Naive thymus-derived CD4-positive, alpha-beta T cell (primary cell): ENCODE measurements at regions of chr5 and their contacts with region 1.

Region 1: GRCh38 chr5:32329308-32329834 is 16.6 kb upstream of the MTMR12 start:
- DNase-seq: peak; percentile 15 to 59 (median 45)
- ATAC-seq: peak; percentile 93
- H3K4me3 ChIP-seq: no peak overlapping the region
- H3K4me3 Mint-ChIP-seq: no peak overlapping the region
- H3K27ac ChIP-seq: no peak overlapping the region
- H3K27ac Mint-ChIP-seq: peak overlapping the region in 1 of 9 donors; percentile 1
- H3K4me1 ChIP-seq: no peaks in the 10 kb centered on the region
- H3K4me1 Mint-ChIP-seq: peaks cover 0 to 5% (median 0%) of the 10 kb centered on the region in 7 donors
- H3K27me3 ChIP-seq: no peaks in the 10 kb centered on the region
- H3K27me3 Mint-ChIP-seq: no peaks in the 10 kb centered on the region

Region 2: GRCh38 chr5:31581498-31582099 is 747.8 kb before region 1 on chr5:
- CTCF ChIA-PET with region 1: no interaction called
- POLR2A ChIA-PET with region 1: no interaction called
- intact Hi-C with region 1: loop called in 1 of 2 experiments (anchors 1 kb)
- DNase-seq: peak in 6 of 9 donors; percentile 1 to 49 (median 34)
- ATAC-seq: peak; percentile 36
- H3K4me3 ChIP-seq: no peak overlapping the region
- H3K4me3 Mint-ChIP-seq: no peak overlapping the region
- H3K27ac ChIP-seq: no peak overlapping the region
- H3K27ac Mint-ChIP-seq: no peak overlapping the region
- H3K4me1 ChIP-seq: no peaks in the 10 kb centered on the region
- H3K4me1 Mint-ChIP-seq: no peaks in the 10 kb centered on the region
- H3K27me3 ChIP-seq: no peaks in the 10 kb centered on the region
- H3K27me3 Mint-ChIP-seq: peaks cover 10 to 31% (median 17%) of the 10 kb centered on the region in 5 donors

Region 3: DNA sequence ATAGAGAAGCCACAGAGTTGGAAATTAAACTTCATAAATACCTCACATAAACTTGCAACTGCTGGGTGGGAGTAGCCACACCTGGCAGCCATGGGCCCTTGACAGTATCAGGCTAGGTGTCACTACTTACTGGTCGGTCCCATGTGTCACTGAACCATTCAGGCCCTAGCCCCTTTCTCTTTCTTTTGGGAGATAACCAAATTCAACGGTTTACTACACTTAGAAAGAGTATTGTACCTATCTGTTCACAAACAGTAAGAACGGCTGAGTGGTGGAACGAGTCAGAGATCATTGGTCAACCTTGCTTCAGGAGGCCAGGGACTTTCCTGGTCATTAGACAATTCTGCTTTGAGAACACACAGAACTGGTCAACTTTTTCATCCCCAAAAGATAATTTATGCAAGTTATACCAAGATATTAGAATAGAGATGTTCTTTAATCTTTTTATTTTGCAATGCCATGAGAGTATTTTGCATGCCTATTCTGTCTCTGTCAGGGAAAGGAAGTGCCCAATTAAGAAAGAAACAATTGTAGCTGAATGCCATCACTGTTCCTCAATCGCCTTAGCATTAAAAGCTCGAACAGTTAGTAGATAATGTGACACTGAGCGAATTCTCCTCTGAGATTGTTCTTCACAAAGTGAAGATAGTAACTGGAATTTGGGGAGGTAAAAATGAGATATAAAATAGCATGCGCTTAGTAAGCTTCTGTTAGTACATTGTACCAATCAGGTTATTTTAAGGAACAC is 206.1 kb before region 1 on chr5:
- CTCF ChIA-PET with region 1: no interaction called
- POLR2A ChIA-PET with region 1: no interaction called
- intact Hi-C with region 1: loop called in 1 of 2 experiments (anchors 5 kb)
- DNase-seq: no peak
- ATAC-seq: no peak
- H3K4me3 ChIP-seq: no peak overlapping the region
- H3K4me3 Mint-ChIP-seq: no peak overlapping the region
- H3K27ac ChIP-seq: no peak overlapping the region
- H3K27ac Mint-ChIP-seq: peak overlapping the region in 3 of 9 donors; percentile 6 to 50 (median 7)
- H3K4me1 ChIP-seq: peaks cover 0 to 3% of the 10 kb centered on the region in 2 donors
- H3K4me1 Mint-ChIP-seq: peaks cover 9 to 30% (median 20%) of the 10 kb centered on the region in 7 donors
- H3K27me3 ChIP-seq: no peaks in the 10 kb centered on the region
- H3K27me3 Mint-ChIP-seq: no peaks in the 10 kb centered on the region

Region 4: DNA sequence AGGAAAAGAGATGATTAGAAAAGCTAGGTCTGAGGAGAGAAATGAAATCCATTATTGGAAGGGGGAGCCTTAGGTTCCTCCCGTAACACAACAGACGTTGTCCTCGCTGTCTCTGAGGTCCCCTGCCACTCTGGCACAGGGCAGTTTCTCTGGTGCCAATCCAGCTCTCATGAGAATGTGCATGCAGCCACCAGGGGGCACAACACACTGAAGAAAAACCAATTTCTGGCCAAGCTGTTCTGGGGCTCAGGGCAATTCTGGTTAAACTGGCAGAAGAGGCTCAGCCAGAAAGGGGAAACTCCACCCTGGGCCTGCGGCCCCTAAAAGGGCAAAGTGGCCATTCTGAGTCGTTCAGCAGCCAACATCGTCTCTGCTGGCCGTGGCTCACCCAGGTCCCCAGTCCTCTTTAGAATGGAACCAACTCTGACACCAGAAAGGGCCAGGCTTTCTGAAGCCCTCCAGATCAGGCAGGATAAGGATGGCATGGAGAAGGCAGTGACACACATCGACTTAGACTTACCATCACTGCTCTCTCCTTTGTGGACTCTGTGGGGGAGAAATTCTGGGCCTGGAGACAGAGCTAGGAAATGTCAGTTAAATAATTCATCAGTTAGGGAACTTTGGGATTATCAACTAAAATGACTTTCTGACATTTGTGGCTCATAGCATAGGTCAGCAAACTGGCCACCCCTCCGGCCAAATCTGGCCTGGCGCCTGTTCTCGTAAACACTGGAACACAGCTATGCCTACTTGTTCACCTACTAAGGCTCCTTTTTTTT is 96.7 kb before region 1 on chr5:
- CTCF ChIA-PET with region 1: interaction called, 84 read pairs
- POLR2A ChIA-PET with region 1: no interaction called
- intact Hi-C with region 1: loop called (anchors 1 kb)
- DNase-seq: peak; percentile 45 to 73 (median 64)
- ATAC-seq: peak; percentile 88
- H3K4me3 ChIP-seq: no peak overlapping the region
- H3K4me3 Mint-ChIP-seq: no peak overlapping the region
- H3K27ac ChIP-seq: no peak overlapping the region
- H3K27ac Mint-ChIP-seq: peak overlapping the region; percentile 45 to 71 (median 62)
- H3K4me1 ChIP-seq: no peaks in the 10 kb centered on the region
- H3K4me1 Mint-ChIP-seq: peaks cover 0 to 12% (median 7%) of the 10 kb centered on the region in 7 donors
- H3K27me3 ChIP-seq: no peaks in the 10 kb centered on the region
- H3K27me3 Mint-ChIP-seq: no peaks in the 10 kb centered on the region

Region 5: GRCh38 chr5:32276173-32276853 is 53.1 kb before region 1 on chr5:
- CTCF ChIA-PET with region 1: no interaction called
- POLR2A ChIA-PET with region 1: no interaction called
- intact Hi-C with region 1: loop called in 1 of 2 experiments (anchors 5 kb)
- DNase-seq: peak in 5 of 9 donors; percentile 6 to 44 (median 33)
- ATAC-seq: peak; percentile 87
- H3K4me3 ChIP-seq: no peak overlapping the region
- H3K4me3 Mint-ChIP-seq: peak overlapping the region in 8 of 10 donors; percentile 15 to 57 (median 43)
- H3K27ac ChIP-seq: no peak overlapping the region
- H3K27ac Mint-ChIP-seq: peak overlapping the region; percentile 41 to 91 (median 75)
- H3K4me1 ChIP-seq: peaks cover 7 to 16% of the 10 kb centered on the region in 2 donors
- H3K4me1 Mint-ChIP-seq: peaks cover 15 to 54% (median 45%) of the 10 kb centered on the region in 7 donors
- H3K27me3 ChIP-seq: no peaks in the 10 kb centered on the region
- H3K27me3 Mint-ChIP-seq: no peaks in the 10 kb centered on the region

Region 6: GRCh38 chr5:32346869-32347268 is 17.5 kb after region 1 on chr5:
- CTCF ChIA-PET with region 1: no interaction called
- POLR2A ChIA-PET with region 1: no interaction called
- intact Hi-C with region 1: no loop called
- DNase-seq: no peak
- ATAC-seq: no peak
- H3K4me3 ChIP-seq: no peak overlapping the region
- H3K4me3 Mint-ChIP-seq: no peak overlapping the region
- H3K27ac ChIP-seq: no peak overlapping the region
- H3K27ac Mint-ChIP-seq: no peak overlapping the region
- H3K4me1 ChIP-seq: no peaks in the 10 kb centered on the region
- H3K4me1 Mint-ChIP-seq: no peaks in the 10 kb centered on the region
- H3K27me3 ChIP-seq: no peaks in the 10 kb centered on the region
- H3K27me3 Mint-ChIP-seq: peaks cover 0 to 7% (median 0%) of the 10 kb centered on the region in 5 donors

Region 7: DNA sequence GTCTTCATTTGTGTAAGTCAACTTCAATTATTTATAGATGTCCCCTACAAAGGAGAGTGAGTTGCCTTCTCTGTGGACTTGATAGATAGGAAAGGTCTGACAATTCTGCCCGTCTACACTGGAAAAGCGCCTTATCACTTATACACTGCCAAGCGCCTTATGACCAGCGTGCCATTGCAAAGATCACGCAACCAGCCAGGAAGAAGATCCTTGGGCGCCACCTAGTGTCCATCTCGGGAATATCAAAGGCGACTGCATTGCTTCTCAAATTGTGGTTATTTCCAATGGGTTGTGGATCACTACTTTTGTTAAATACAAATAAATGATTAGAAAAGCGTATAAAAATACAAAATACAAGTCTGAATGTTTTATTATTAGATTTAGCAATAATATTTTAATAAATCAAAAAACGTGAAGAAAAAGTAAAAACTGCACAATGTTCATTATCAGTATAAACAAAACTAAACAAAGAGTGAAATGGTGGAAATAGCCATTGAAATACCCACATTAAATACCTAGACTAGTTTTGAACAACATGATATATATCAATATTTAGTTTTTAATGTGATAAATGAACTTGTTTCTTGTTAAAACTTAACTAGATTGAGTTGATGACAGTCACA is 283.8 kb after region 1 on chr5:
- CTCF ChIA-PET with region 1: no interaction called
- POLR2A ChIA-PET with region 1: no interaction called
- intact Hi-C with region 1: loop called in 1 of 2 experiments (anchors 1 kb)
- DNase-seq: peak; percentile 55 to 84 (median 75)
- ATAC-seq: peak; percentile 92
- H3K4me3 ChIP-seq: no peak overlapping the region
- H3K4me3 Mint-ChIP-seq: no peak overlapping the region
- H3K27ac ChIP-seq: no peak overlapping the region
- H3K27ac Mint-ChIP-seq: peak overlapping the region in 2 of 9 donors; percentile 6 to 20
- H3K4me1 ChIP-seq: no peaks in the 10 kb centered on the region
- H3K4me1 Mint-ChIP-seq: peaks cover 3 to 14% (median 6%) of the 10 kb centered on the region in 7 donors
- H3K27me3 ChIP-seq: no peaks in the 10 kb centered on the region
- H3K27me3 Mint-ChIP-seq: no peaks in the 10 kb centered on the region